Activated naive CD4-positive, alpha-beta T cell treated with anti-CD3 and anti-CD28 coated beads for 36 hours (primary cell): ENCODE measurements at regions of chr10 and their contacts with region 1.

Region 1: GRCh38 chr10:102503281-102504220 is at the start of gene SUFU:
- DNase-seq: peak; percentile 99
- H3K4me3 Mint-ChIP-seq: peak within 1 kb of the TSS; percentile 94
- H3K27ac Mint-ChIP-seq: peak within 1 kb of the TSS; percentile 54
- H3K4me1 Mint-ChIP-seq: peaks cover 24% of the 10 kb centered on the region
- H3K27me3 Mint-ChIP-seq: no peaks in the 10 kb centered on the region
- total RNA-seq, gene SUFU: 6.6 to 7.1 TPM

Region 2: DNA sequence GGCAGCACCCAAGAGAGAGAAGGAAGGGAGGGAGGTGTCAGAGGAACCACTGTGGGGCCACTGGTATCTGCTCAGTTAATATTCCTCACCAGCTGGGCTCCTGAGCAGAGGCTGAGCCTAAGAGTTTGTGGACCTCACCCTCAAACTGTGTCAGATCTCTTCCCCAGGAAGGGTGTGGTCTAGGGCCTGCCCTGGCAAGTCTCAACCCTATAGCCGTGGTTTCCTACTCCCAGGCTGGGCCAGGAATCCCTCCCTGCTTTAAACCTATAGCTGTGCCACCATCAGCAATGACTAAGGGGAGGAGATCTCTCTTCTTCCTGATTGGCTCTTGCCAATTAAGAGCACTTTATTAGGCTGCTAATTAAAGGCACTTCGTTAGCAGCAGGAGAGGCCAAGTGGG is 945.3 kb before region 1 on chr10:
- CTCF ChIA-PET with region 1: no interaction called
- intact Hi-C with region 1: no loop called
- DNase-seq: peak; percentile 25
- H3K4me3 Mint-ChIP-seq: no peak overlapping the region
- H3K27ac Mint-ChIP-seq: no peak overlapping the region
- H3K4me1 Mint-ChIP-seq: peaks cover 14% of the 10 kb centered on the region
- H3K27me3 Mint-ChIP-seq: no peaks in the 10 kb centered on the region

Region 3: DNA sequence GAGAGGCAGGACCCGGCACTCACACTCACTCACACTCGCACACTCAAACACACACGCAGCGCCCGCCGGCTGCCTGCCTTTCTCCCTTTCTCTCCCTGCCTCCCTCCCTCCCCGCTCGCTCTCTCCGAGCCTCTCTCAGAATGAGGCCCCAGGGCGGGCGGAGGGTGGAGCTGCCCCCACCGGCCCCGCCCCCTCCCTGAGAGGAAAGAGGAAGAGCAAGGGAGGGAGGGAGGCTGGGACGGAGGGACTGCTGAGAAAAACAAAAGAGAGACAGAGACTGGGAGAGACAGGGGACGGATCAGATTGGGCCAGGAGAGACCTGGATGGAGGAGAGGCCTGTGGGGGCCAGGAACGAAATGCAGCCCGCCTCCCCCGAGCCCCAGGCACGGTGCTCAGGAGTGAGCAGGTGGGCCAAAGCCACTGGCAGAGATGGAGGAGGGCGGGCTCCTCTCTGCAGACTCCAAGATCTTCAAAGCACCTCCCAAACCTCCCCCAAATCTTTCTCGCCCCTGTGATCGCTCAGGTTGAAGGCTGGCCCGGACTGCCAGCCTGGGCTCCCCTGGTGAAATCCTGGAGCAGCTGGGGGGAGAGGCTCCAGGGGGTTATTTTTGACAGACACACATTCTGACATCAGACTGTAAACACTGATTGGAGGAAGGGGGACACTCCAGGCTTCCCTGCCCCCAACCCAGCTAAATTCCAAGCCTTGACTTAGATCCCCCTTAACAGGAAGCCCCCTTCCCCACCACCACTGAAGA is 388.5 kb before region 1 on chr10:
- CTCF ChIA-PET with region 1: no interaction called
- intact Hi-C with region 1: loop called (anchors 1 kb)
- DNase-seq: peak; percentile 92
- H3K4me3 Mint-ChIP-seq: peak overlapping the region; percentile 93
- H3K27ac Mint-ChIP-seq: peak overlapping the region; percentile 98
- H3K4me1 Mint-ChIP-seq: peaks cover 53% of the 10 kb centered on the region
- H3K27me3 Mint-ChIP-seq: no peaks in the 10 kb centered on the region

Region 4: DNA sequence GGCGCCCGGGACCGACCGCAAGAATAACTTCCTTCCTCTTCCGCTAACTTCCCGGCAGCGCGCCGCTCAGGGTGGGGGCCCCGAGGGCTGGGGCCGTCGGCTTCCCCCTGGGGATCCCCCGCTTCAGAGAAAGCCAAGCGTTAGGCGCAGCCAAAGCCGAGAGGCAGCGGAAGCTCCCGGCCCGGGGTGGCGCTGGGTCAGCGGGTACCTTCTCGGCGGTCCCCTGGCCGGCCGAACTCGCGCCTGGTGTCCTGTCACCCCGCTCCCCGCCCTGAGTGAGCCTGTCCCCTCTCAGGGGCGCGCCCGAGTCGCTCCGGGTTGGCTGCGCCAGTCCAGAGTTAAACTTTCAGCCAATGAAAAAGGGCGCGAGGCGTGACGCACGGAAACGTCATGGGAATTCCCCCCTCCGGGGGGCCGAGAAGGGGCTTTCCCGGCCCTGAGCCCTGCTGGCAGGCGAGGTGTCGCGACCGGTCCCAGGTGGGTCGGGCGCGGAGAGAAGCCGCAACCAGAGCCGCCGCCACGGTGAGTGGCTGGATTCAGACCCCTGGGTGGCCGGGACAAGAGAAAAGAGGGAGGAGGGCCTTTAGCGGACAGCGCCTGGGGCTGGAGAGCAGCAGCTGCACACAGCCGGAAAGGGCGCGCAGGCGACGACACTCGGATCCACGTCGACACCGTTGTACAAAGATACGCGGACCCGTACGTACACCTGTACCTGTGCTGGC is 109.3 kb before region 1 on chr10:
- CTCF ChIA-PET with region 1: interaction called, 5 read pairs
- intact Hi-C with region 1: loop called (anchors 1 kb)
- DNase-seq: peak; percentile 99
- H3K4me3 Mint-ChIP-seq: peak overlapping the region; percentile 87
- H3K27ac Mint-ChIP-seq: peak overlapping the region; percentile 99
- H3K4me1 Mint-ChIP-seq: peaks cover 44% of the 10 kb centered on the region
- H3K27me3 Mint-ChIP-seq: no peaks in the 10 kb centered on the region

Region 5: GRCh38 chr10:102461187-102462054 is 42.1 kb before region 1 on chr10:
- CTCF ChIA-PET with region 1: interaction called, 3 read pairs
- intact Hi-C with region 1: loop called (anchors 1 kb)
- DNase-seq: peak; percentile 94
- H3K4me3 Mint-ChIP-seq: peak overlapping the region; percentile 88
- H3K27ac Mint-ChIP-seq: peak overlapping the region; percentile 73
- H3K4me1 Mint-ChIP-seq: peaks cover 23% of the 10 kb centered on the region
- H3K27me3 Mint-ChIP-seq: no peaks in the 10 kb centered on the region

Region 6: GRCh38 chr10:102492344-102492939 is 11.1 kb before region 1 on chr10:
- CTCF ChIA-PET with region 1: no interaction called
- intact Hi-C with region 1: no loop called
- DNase-seq: no peak
- H3K4me3 Mint-ChIP-seq: no peak overlapping the region
- H3K27ac Mint-ChIP-seq: no peak overlapping the region
- H3K4me1 Mint-ChIP-seq: peaks cover 20% of the 10 kb centered on the region
- H3K27me3 Mint-ChIP-seq: no peaks in the 10 kb centered on the region

Region 7: DNA sequence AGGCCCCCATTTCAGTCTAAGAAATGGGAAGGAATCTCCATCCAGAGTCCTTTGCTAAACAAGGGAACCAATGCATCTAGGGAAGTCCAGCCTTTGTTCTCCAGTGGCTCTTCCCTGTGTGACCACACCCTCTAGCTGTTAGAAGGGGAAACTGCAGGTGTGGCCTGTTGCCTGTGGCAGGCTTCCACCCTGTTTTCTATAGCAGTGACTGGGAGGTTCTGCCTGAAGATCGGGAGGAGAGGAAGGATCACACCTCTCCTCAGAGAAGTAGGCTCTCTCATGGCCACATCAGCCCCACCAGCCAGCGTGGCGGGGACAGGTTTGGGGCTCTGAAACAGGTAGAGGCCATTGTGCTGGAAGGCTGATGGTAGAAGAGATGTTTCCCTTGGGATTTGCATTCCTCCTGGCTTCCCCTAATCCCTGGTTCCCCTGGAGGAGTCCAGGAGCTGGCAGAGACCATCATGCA is 93.0 kb after region 1 on chr10:
- CTCF ChIA-PET with region 1: interaction called, 3 read pairs
- intact Hi-C with region 1: loop called (anchors 1 kb)
- DNase-seq: peak; percentile 58
- H3K4me3 Mint-ChIP-seq: no peak overlapping the region
- H3K27ac Mint-ChIP-seq: no peak overlapping the region
- H3K4me1 Mint-ChIP-seq: no peaks in the 10 kb centered on the region
- H3K27me3 Mint-ChIP-seq: no peaks in the 10 kb centered on the region

Region 8: GRCh38 chr10:102743588-102744373 is 240.2 kb after region 1 on chr10 and contains the start of gene WBP1L:
- CTCF ChIA-PET with region 1: no interaction called
- intact Hi-C with region 1: loop called (anchors 1 kb)
- DNase-seq: peak; percentile 97
- H3K4me3 Mint-ChIP-seq: peak within 1 kb of the TSS; percentile 90
- H3K27ac Mint-ChIP-seq: peak within 1 kb of the TSS; percentile 83
- H3K4me1 Mint-ChIP-seq: peaks cover 43% of the 10 kb centered on the region
- H3K27me3 Mint-ChIP-seq: no peaks in the 10 kb centered on the region
- total RNA-seq, gene WBP1L: 10.5 to 11.8 TPM